ENCODE measurements at regions of chr14 and their contacts with region 1.

Region 1: GRCh38 chr14:103808403-103809001 is 38.9 kb downstream of the PPP1R13B start:
- DNase-seq: peak; percentile 77 to 81 (median 80)
- ATAC-seq: peak; percentile 70 to 88 (median 78)
- H3K4me3 ChIP-seq: no peak overlapping the region
- H3K27ac ChIP-seq: no peak overlapping the region
- H3K4me1 ChIP-seq: peaks cover 3 to 75% (median 27%) of the 10 kb centered on the region in 12 donors
- H3K27me3 ChIP-seq: no peaks in the 10 kb centered on the region
- CTCF ChIP-seq: peak; percentile 78 to 94 (median 90)
- POLR2A ChIP-seq: no peak

Region 2: DNA sequence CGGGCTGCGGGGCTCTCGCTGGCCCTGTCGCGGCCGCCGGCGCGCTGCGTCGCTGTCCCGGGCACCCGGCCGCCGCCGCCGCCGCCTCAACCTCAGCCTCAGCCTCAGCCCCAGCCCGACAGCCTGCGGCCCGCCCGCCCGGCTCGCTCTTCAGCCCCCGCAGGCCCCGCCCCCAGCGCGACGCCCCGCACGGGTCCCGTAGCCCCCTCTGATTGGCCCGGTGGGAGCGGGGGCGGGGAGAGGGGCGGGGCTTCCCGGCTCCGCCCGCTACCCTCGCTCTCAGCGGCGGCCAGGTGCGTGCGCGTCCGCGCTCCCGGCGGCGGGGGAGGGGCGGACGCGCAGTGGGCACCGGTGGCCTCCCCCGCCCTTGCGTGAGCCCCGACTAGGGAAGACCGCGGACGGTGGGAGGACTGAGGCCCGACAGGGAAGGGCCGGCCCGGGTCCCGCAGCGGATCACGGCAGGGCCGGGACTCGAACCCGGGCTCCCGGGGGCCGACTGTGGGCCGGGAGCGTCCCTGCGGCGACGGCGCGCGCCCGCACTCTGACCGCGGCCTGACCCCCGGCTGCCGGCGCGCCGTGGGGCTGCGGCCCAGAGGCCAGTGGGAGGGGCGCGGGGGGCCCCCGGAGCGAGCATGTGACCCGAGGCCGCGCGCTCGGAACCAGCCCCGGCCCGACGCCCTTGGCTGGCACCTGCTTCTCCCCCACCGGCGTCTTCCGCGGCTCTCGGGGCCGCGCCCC is 39.1 kb after region 1 on chr14 and contains the start of gene PPP1R13B:
- intact Hi-C with region 1: loop called in 4 of 10 experiments (anchors 5 kb)
- DNase-seq: peak; percentile 95 to 96 (median 95)
- ATAC-seq: peak; percentile 93 to 96 (median 96)
- H3K4me3 ChIP-seq: peak within 1 kb of the TSS; percentile 50 to 98 (median 82)
- H3K27ac ChIP-seq: peak within 1 kb of the TSS; percentile 79 to 96 (median 90)
- H3K4me1 ChIP-seq: peaks cover 0 to 44% (median 25%) of the 10 kb centered on the region in 12 donors
- H3K27me3 ChIP-seq: peaks cover 0 to 9% (median 0%) of the 10 kb centered on the region in 9 donors
- CTCF ChIP-seq: no peak
- POLR2A ChIP-seq: peak in 1 of 2 donors; percentile 67
- total RNA-seq, gene PPP1R13B: 59.0 to 96.2 (median 78.1) TPM

Region 3: GRCh38 chr14:103880348-103881267 is 72.1 kb after region 1 on chr14:
- intact Hi-C with region 1: loop called in 1 of 10 experiments (anchors 2 kb)
- DNase-seq: peak; percentile 70 to 89 (median 81)
- ATAC-seq: peak; percentile 47 to 60 (median 53)
- H3K4me3 ChIP-seq: peak overlapping the region in 9 of 12 donors; percentile 5 to 40 (median 27)
- H3K27ac ChIP-seq: peak overlapping the region; percentile 63 to 95 (median 84)
- H3K4me1 ChIP-seq: peaks cover 10 to 42% (median 37%) of the 10 kb centered on the region in 12 donors
- H3K27me3 ChIP-seq: peaks cover 0 to 7% (median 0%) of the 10 kb centered on the region in 9 donors
- CTCF ChIP-seq: no peak
- POLR2A ChIP-seq: no peak

Region 4: DNA sequence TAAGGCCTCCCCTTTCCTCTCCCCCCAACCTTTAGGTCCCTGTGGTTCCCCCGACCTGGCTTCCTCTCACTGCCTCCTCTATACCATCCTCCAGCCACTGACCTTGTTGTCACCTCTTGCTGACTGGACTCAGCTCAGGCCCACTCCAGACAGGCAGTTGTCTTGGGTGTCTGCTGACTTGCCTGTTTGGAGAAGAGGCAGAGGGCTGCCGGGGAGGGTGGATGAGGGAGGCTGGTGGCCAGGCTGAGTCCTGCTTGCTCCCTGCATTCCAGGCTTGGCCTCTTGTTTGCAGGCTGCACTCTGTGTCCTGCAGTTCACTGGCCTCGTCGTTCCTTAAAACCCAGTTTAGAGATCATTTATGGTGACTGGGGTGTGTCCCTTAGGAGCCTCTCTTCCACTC is 164.9 kb after region 1 on chr14:
- intact Hi-C with region 1: loop called in 3 of 10 experiments (anchors 5 to 10 kb)
- DNase-seq: no peak
- ATAC-seq: peak in 3 of 4 donors; percentile 29 to 64 (median 36)
- H3K4me3 ChIP-seq: no peak overlapping the region
- H3K27ac ChIP-seq: no peak overlapping the region
- H3K4me1 ChIP-seq: peaks cover 0 to 7% (median 0%) of the 10 kb centered on the region in 12 donors
- H3K27me3 ChIP-seq: no peaks in the 10 kb centered on the region
- CTCF ChIP-seq: no peak
- POLR2A ChIP-seq: no peak

Region 5: DNA sequence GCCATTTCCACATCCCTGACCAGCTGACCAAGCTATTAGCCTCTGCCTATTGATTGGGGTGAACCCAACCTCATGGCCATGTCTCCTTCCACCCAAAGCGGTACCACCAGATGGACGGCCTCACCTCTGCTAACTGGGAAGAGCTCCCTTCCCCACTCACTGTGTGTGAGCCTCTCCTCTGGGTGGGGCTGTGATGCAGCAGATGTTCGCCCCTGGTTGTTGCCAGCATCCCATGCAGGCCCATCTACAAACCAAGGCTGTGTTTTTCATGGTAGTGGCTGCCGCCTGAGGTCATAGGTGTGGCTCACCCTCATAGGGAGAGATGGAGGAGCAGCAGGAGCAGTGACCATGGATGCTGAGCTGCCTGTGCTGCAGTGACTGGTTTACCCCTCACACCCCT is 181.5 kb after region 1 on chr14:
- intact Hi-C with region 1: loop called in 1 of 10 experiments (anchors 5 kb)
- DNase-seq: no peak
- ATAC-seq: no peak
- H3K4me3 ChIP-seq: no peak overlapping the region
- H3K27ac ChIP-seq: no peak overlapping the region
- H3K4me1 ChIP-seq: no peaks in the 10 kb centered on the region
- H3K27me3 ChIP-seq: peaks cover 0 to 9% (median 0%) of the 10 kb centered on the region in 9 donors
- CTCF ChIP-seq: no peak
- POLR2A ChIP-seq: no peak

Measured in heart left ventricle (tissue), 16 donors.